ENCODE measurements at regions of chr3 and their contacts with region 1.

Region 1: GRCh38 chr3:72938471-72939265 is 50.8 kb downstream of the GXYLT2 start:
- DNase-seq: peak; percentile 29 to 80 (median 58)
- ATAC-seq: peak; percentile 96
- H3K4me3 ChIP-seq: no peak overlapping the region
- H3K27ac ChIP-seq: peak overlapping the region; percentile 44; the same call in 2 of the 3 replicates
- H3K4me1 ChIP-seq: peaks cover 0 to 4% of the 10 kb centered on the region in 2 experiments; a peak in 2 of 5 replicates
- H3K27me3 ChIP-seq: no peaks in the 10 kb centered on the region
- CTCF ChIP-seq: peak in 2 of 3 experiments; percentile 45 to 64; a peak in 5 of 6 replicates
- EP300 ChIP-seq: peak; percentile 77
- POLR2A ChIP-seq: no peak
- RAD21 ChIP-seq: peak; percentile 45 to 61

Region 2: GRCh38 chr3:72887705-72888545 is 50.7 kb before region 1 on chr3 and contains the start of gene GXYLT2:
- CTCF ChIA-PET with region 1: no interaction called
- POLR2A ChIA-PET with region 1: no interaction called
- in situ Hi-C with region 1: no loop called
- intact Hi-C with region 1: loop called (anchors 5 kb)
- DNase-seq: peak; percentile 62 to 76 (median 64)
- ATAC-seq: peak; percentile 85
- H3K4me3 ChIP-seq: peak within 1 kb of the TSS; percentile 48
- H3K27ac ChIP-seq: peak within 1 kb of the TSS; percentile 52; the same call in 2 of the 3 replicates
- H3K4me1 ChIP-seq: peaks cover 4 to 25% of the 10 kb centered on the region in 2 experiments; a peak in 3 of 5 replicates
- H3K27me3 ChIP-seq: no peaks in the 10 kb centered on the region
- CTCF ChIP-seq: peak in 2 of 3 experiments; percentile 29 to 34; a peak in 2 of 6 replicates
- EP300 ChIP-seq: no peak
- POLR2A ChIP-seq: no peak
- RAD21 ChIP-seq: peak in 1 of 2 experiments; percentile 14; a peak in 1 of 4 replicates
- polyA plus RNA-seq, gene GXYLT2: 0.71 to 1.4 TPM

Region 3: GRCh38 chr3:72996473-72997333 is 58.0 kb after region 1 on chr3 and contains the start of gene PPP4R2:
- CTCF ChIA-PET with region 1: interaction called, 21 read pairs
- POLR2A ChIA-PET with region 1: no interaction called
- in situ Hi-C with region 1: no loop called
- intact Hi-C with region 1: loop called (anchors 1 kb)
- DNase-seq: peak; percentile 79 to 91 (median 80)
- ATAC-seq: peak; percentile 88
- H3K4me3 ChIP-seq: peak within 1 kb of the TSS; percentile 85
- H3K27ac ChIP-seq: peak within 1 kb of the TSS; percentile 96
- H3K4me1 ChIP-seq: peaks cover 13 to 18% of the 10 kb centered on the region in 2 experiments; a peak in 4 of 5 replicates
- H3K27me3 ChIP-seq: no peaks in the 10 kb centered on the region
- CTCF ChIP-seq: no peak
- EP300 ChIP-seq: no peak
- POLR2A ChIP-seq: peak; percentile 71
- RAD21 ChIP-seq: no peak
- polyA plus RNA-seq, gene PPP4R2: 11.0 to 13.8 TPM

Region 4: DNA sequence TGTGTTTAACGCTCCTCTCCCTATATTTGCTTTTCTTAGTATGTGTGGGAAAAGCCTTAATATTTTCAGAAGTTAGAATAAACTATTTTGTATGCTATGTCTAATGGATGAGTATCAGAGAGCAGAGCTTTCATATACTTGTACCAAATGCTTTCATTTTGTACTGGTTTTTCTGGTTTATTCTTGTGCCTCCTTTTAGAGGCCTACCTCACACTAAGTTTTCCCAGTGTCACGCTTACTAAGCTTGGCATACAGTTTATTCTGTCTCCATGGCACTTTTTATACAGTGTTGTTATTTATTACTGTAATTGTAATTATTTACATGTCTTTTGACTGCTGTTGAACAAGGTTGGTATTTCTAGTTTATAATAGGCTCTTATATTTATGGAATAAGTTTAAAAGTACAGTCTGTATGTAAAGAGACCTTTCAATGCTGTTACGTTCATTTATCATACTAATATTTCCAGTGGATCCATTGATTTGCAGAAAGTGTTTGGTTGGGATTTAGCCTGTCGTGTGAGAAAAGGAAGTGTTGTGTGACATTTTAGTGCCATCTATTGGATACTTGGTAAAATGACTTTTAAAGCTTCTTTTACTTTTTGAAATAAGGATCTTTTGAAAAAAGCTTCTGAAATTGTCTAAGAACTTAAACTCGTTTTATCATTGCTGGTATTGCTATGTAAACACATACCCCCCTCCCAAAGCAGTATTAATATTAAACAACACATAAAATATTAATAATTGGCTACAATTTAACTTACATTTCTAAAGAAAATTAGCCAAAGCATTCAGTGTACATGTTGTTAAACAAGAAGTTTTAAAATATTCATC is 117.6 kb after region 1 on chr3:
- CTCF ChIA-PET with region 1: interaction called, 21 read pairs
- POLR2A ChIA-PET with region 1: no interaction called
- in situ Hi-C with region 1: no loop called
- intact Hi-C with region 1: loop called (anchors 1 kb)
- DNase-seq: peak in 1 of 4 experiments; percentile 37
- ATAC-seq: peak; percentile 58; the same call in 2 of the 3 replicates
- H3K4me3 ChIP-seq: no peak overlapping the region
- H3K27ac ChIP-seq: peak overlapping the region; percentile 19; the same call in 1 of the 3 replicates
- H3K4me1 ChIP-seq: no peaks in the 10 kb centered on the region
- H3K27me3 ChIP-seq: no peaks in the 10 kb centered on the region
- CTCF ChIP-seq: peak; percentile 25 to 57 (median 27); a peak in 3 of 6 replicates
- EP300 ChIP-seq: no peak
- POLR2A ChIP-seq: no peak
- RAD21 ChIP-seq: peak; percentile 53 to 63

Region 5: DNA sequence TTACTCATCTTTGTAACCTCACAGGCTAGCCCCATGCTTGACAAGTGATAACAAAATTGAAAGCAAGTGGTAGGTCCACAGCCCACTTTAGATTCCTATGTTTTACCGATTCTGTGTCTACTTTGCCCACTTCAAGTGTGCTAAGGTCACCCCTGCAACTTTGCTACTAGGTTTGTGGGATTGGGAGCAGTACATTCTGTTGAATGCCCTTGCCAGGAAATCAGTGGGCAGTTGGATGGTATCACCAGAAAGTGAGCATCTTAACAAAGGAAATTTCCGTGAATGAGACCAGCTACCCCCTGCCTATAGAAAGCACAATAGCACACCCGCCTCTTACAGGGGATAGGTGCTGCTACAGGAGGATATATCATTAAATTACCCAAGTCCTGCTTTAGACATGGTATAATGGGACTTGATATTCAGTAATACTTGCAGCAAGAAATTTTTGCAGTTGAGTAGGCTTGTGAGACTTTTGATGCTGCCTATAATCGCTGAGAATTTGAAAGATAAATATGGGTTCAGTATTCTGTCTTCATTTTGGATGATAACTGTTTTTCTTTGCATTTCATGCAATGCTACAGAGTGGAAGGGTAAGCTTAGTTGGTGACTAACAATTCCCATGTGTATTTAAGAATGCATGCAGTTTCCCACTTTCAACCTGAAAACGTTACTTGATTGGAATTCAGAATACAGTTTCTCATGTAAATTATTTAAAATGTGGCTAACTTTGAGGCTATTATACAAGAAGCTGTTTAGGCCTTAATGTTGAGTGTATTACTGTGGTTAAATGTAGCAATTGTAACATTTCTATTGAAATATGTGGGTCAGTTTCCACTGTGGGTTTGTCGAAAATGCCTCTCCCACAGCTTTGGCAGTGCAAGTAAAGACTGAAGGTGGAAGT is 132.3 kb after region 1 on chr3:
- CTCF ChIA-PET with region 1: no interaction called
- POLR2A ChIA-PET with region 1: no interaction called
- in situ Hi-C with region 1: loop called (anchors 10 kb)
- intact Hi-C with region 1: loop called (anchors 5 kb)
- DNase-seq: no peak
- ATAC-seq: peak; percentile 31; the same call in 2 of the 3 replicates
- H3K4me3 ChIP-seq: no peak overlapping the region
- H3K27ac ChIP-seq: no peak overlapping the region
- H3K4me1 ChIP-seq: peaks cover 4 to 12% of the 10 kb centered on the region in 2 experiments; a peak in 4 of 5 replicates
- H3K27me3 ChIP-seq: no peaks in the 10 kb centered on the region
- CTCF ChIP-seq: no peak
- EP300 ChIP-seq: no peak
- POLR2A ChIP-seq: peak; percentile 22; the same call in 1 of the 2 replicates
- RAD21 ChIP-seq: no peak

Region 6: DNA sequence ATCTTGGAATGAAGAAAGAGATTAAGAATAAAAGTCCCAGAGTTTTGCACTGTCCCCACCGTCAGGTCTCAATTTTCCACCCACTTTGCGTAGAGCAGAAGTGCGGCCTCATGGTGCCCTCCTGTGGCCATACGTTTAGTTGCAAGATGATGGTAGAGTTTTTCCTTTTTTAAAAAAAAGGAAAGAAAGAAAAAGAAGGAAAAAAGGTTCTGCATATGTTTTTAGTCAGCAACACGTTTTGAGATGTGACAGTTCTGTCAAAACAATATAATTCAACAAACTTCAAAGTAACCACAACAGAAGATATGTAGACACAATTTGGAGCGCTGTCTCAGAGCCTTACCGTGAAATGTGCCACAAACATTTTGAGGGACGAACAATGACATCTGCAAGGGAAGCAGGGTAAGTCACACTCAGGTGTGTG is 147.4 kb after region 1 on chr3:
- CTCF ChIA-PET with region 1: interaction called, 21 read pairs
- POLR2A ChIA-PET with region 1: no interaction called
- in situ Hi-C with region 1: no loop called
- intact Hi-C with region 1: loop called (anchors 1 kb)
- DNase-seq: peak; percentile 42 to 62 (median 46)
- ATAC-seq: peak; percentile 84
- H3K4me3 ChIP-seq: no peak overlapping the region
- H3K27ac ChIP-seq: no peak overlapping the region
- H3K4me1 ChIP-seq: no peaks in the 10 kb centered on the region; a peak in 1 of 5 replicates
- H3K27me3 ChIP-seq: no peaks in the 10 kb centered on the region; a peak in 1 of 5 replicates
- CTCF ChIP-seq: peak; percentile 68 to 79 (median 71)
- EP300 ChIP-seq: no peak
- POLR2A ChIP-seq: no peak
- RAD21 ChIP-seq: peak; percentile 80 to 81